OCI-LY7 (cell line): ENCODE measurements at regions of chr11 and their contacts with region 1.

Region 1: GRCh38 chr11:58579192-58580129 is 598 bp downstream of the ZFP91 start:
- DNase-seq: peak; percentile 92
- H3K4me3 ChIP-seq: peak overlapping the region; percentile 87
- H3K27ac ChIP-seq: peak overlapping the region; percentile 95
- H3K4me1 ChIP-seq: peaks cover 50% of the 10 kb centered on the region
- CTCF ChIP-seq: peak; percentile 73

Region 2: GRCh38 chr11:57667736-57668435 is 911.6 kb before region 1 on chr11 and contains the start of gene ZDHHC5:
- CTCF ChIA-PET with region 1: no interaction called
- POLR2A ChIA-PET with region 1: no interaction called
- intact Hi-C with region 1: loop called (anchors 5 kb)
- DNase-seq: peak; percentile 99
- H3K4me3 ChIP-seq: peak within 1 kb of the TSS; percentile 94
- H3K27ac ChIP-seq: peak within 1 kb of the TSS; percentile 88
- H3K4me1 ChIP-seq: peaks cover 23% of the 10 kb centered on the region
- CTCF ChIP-seq: peak; percentile 34
- total RNA-seq, gene ZDHHC5: 23.4 and 27.5 TPM in 2 replicates

Region 3: DNA sequence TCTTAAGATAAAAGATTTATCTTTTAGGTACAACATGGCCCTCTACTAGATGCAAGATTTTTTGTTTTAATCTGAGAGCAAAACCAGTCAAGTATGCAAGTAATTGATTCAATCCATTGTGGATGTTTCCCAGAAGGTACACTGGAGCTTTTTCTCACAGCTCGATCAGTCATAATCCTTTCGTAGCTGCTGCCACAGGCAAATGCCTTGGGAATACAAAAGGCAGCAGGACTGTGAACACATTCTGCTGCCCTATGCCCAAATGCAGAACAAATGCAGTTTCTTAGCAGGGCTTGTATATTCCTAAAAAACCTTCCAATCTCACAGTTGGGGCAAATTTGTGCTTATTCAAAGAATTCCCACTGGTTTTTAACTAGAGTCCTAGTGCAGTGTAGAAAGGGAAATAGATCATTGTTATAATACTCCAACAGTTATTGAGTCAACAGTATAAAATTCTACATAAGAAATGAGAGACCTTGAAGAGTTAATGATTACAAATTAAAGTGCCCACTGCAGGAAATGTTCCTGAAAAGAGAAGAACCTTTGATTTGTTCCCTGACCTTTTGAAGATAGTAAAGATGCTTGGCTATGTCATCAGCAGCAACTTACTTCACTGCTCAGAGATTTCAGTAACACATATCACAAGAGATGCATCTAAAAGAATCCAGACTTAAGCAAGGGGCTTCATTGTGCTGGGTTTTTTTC is 17.9 kb before region 1 on chr11:
- CTCF ChIA-PET with region 1: no interaction called
- POLR2A ChIA-PET with region 1: interaction called, 21 read pairs
- intact Hi-C with region 1: loop called (anchors 2 kb)
- DNase-seq: no peak
- H3K4me3 ChIP-seq: no peak overlapping the region
- H3K27ac ChIP-seq: no peak overlapping the region
- H3K4me1 ChIP-seq: peaks cover 12% of the 10 kb centered on the region
- CTCF ChIP-seq: no peak

Region 4: DNA sequence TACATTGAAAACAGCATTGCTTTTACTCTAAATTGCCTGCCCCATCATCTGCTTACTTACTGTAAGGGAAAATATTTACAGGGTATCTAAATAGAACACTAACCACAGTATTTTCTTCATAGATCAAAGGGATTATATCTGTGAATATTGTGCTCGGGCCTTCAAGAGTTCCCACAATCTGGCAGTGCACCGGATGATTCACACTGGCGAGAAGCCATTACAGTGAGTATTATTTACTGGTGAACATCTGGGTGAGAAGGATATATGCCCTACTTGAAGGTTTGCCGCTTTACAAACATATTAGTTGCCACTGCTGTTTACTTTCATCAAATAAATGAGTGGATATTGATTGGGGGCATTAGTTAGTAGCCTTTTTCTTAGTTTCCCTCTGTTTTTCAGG is 37.1 kb after region 1 on chr11:
- CTCF ChIA-PET with region 1: no interaction called
- POLR2A ChIA-PET with region 1: interaction called, 3 read pairs
- intact Hi-C with region 1: loop called (anchors 5 kb)
- DNase-seq: no peak
- H3K4me3 ChIP-seq: no peak overlapping the region
- H3K27ac ChIP-seq: no peak overlapping the region
- H3K4me1 ChIP-seq: peaks cover 4% of the 10 kb centered on the region
- CTCF ChIP-seq: no peak

Region 5: GRCh38 chr11:58900479-58901420 is 321.3 kb after region 1 on chr11:
- CTCF ChIA-PET with region 1: no interaction called
- POLR2A ChIA-PET with region 1: no interaction called
- intact Hi-C with region 1: no loop called
- DNase-seq: peak; percentile 30
- H3K4me3 ChIP-seq: no peak overlapping the region
- H3K27ac ChIP-seq: no peak overlapping the region
- H3K4me1 ChIP-seq: no peaks in the 10 kb centered on the region
- CTCF ChIP-seq: peak; percentile 75

Region 6: DNA sequence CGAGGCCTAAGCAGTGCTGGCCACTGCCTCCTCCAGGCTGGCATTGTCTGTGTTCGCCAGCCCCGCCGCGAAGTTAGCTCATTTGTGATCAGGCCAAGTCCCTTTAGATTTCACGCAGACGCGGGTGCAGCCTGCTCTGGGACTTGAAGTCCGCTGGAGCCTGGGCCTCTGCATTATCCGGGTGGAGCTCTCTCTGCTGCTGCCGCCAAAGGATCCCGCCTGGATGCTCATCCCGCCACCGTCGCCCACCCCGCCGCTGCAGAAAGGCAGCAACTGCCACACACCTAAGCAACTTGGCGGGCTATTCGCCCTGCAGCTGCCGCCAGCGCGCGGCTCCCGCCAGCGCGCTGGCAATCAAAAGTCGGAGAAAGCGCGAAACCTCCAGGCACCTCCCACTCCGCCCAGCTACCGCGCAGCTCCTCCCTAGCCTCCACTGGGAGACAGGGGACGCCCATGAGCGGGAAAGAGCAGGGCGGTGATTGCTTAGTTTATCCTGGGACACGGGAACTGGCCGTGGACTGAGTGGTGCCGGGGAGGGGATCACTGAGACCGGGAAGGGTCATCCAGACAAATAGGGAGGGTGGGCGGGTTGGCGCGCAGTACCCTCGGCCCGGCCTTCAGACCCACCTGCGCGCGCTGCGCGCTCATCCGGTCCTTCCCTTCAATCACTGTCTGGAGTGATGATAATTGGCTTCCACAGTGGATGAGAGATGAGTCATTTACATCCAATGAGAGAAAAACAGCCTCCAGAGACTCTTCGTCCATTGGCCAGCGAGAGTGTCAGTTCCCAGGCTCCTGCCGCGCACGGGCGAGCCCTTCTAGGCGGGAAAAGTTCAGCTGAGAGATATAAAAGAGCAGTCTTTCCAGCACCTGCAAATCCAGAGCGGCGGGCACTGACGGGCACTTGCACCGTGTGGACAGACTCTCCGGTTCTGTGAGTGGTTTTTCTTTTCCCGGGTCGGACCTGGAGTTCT is 527.2 kb after region 1 on chr11 and contains the start of gene FAM111B:
- CTCF ChIA-PET with region 1: no interaction called
- POLR2A ChIA-PET with region 1: interaction called, 3 read pairs
- intact Hi-C with region 1: loop called (anchors 1 kb)
- DNase-seq: peak; percentile 91
- H3K4me3 ChIP-seq: peak within 1 kb of the TSS; percentile 88
- H3K27ac ChIP-seq: peak within 1 kb of the TSS; percentile 70
- H3K4me1 ChIP-seq: peaks cover 77% of the 10 kb centered on the region
- CTCF ChIP-seq: peak; percentile 35
- total RNA-seq, gene FAM111B: 30.3 and 37.6 TPM in 2 replicates

Region 7: DNA sequence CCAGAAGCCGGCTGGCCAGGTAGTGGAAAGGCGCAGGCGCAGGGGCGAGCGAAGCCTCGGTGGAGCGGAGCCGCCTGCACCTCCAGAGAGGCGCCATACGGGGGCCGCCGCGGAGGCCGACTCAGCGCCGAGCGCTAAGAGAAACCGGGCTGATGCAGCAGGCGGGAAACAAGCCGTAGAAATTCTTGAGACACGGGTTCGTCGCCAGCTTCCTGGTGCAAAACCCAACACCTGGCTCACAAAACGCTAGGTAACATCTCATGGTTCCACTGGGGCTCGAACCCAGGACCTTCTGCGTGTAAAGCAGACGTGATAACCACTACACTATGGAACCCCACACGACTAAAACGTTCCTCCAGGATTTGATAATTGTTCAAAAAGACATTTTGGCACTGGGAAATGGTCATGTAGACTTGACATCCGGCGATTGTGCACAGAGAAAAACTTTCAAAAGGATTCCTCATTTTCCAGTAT is 970.9 kb after region 1 on chr11:
- CTCF ChIA-PET with region 1: no interaction called
- POLR2A ChIA-PET with region 1: no interaction called
- intact Hi-C with region 1: loop called (anchors 2 kb)
- DNase-seq: peak; percentile 95
- H3K4me3 ChIP-seq: peak overlapping the region; percentile 72
- H3K27ac ChIP-seq: peak overlapping the region; percentile 91
- H3K4me1 ChIP-seq: peaks cover 24% of the 10 kb centered on the region
- CTCF ChIP-seq: peak; percentile 65